CD4-positive, alpha-beta memory T cell (primary cell): ENCODE measurements at regions of chr6 and their contacts with region 1.

Region 1: GRCh38 chr6:16761471-16762267 is 409 bp upstream of the ATXN1 start:
- DNase-seq: peak; percentile 87 to 96 (median 89)
- H3K4me3 ChIP-seq: peak overlapping the region; percentile 75 to 84
- H3K4me3 Mint-ChIP-seq: peak overlapping the region; percentile 91 to 100 (median 98)
- H3K27ac ChIP-seq: peak overlapping the region; percentile 99
- H3K27ac Mint-ChIP-seq: peak overlapping the region; percentile 97 to 100 (median 99)
- H3K4me1 ChIP-seq: peaks cover 57% of the 10 kb centered on the region
- H3K4me1 Mint-ChIP-seq: peaks cover 46 to 87% (median 57%) of the 10 kb centered on the region in 4 donors
- H3K27me3 ChIP-seq: no peaks in the 10 kb centered on the region
- H3K27me3 Mint-ChIP-seq: peaks cover 0 to 4% of the 10 kb centered on the region in 2 donors

Region 2: GRCh38 chr6:16128759-16129622 is 632.7 kb before region 1 on chr6 and contains the start of gene MYLIP:
- CTCF ChIA-PET with region 1: no interaction called
- POLR2A ChIA-PET with region 1: interaction called, 5 read pairs
- intact Hi-C with region 1: loop called (anchors 5 kb)
- DNase-seq: peak; percentile 96 to 97 (median 97)
- H3K4me3 ChIP-seq: peak within 1 kb of the TSS; percentile 66 to 89
- H3K4me3 Mint-ChIP-seq: peak within 1 kb of the TSS; percentile 95 to 99 (median 98)
- H3K27ac ChIP-seq: peak within 1 kb of the TSS; percentile 93
- H3K27ac Mint-ChIP-seq: peak within 1 kb of the TSS; percentile 96 to 98 (median 97)
- H3K4me1 ChIP-seq: peaks cover 38% of the 10 kb centered on the region
- H3K4me1 Mint-ChIP-seq: peaks cover 18 to 54% (median 31%) of the 10 kb centered on the region in 4 donors
- H3K27me3 ChIP-seq: no peaks in the 10 kb centered on the region
- H3K27me3 Mint-ChIP-seq: peaks cover 3% of the 10 kb centered on the region in 2 donors
- total RNA-seq, gene MYLIP: 17.5 to 19.9 TPM

Region 3: DNA sequence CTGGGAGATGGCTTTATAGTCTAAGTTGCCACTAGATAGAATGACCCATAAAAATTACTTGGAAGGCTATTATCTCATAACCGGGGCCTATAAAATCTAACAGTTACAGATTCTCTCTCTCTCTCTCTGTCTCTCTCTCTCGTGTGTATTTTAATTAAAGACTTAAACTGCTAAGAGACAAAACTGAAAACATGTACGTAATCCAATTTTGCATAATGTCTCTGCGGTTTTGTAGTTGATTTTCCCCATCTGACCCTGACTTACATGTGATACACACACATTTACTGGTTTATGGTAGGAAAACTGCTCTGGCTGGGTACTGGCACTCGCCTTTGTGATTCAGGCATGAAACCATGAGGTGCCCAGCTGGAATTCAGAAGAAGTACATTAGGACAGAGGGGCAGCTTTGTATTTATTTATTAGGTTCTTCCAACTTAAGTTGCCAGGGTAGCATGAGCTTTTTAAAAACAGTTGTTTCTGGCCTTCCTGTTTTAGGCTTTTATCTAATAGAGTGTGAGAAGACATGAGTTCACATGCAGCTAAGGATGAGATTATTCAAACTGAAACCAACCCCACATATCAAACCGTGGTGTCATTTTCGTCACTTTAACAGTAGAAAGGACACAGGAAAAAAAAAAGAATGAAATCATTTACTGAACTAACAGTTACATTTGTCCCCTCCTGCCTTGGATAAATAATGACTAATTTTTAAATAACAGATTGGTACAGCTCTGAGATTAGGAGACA is 340.8 kb before region 1 on chr6:
- CTCF ChIA-PET with region 1: interaction called, 7 read pairs
- POLR2A ChIA-PET with region 1: interaction called, 13 read pairs
- intact Hi-C with region 1: no loop called
- DNase-seq: peak; percentile 75 to 86 (median 76)
- H3K4me3 ChIP-seq: peak overlapping the region; percentile 24 to 32
- H3K4me3 Mint-ChIP-seq: peak overlapping the region; percentile 73 to 92 (median 84)
- H3K27ac ChIP-seq: peak overlapping the region; percentile 69
- H3K27ac Mint-ChIP-seq: peak overlapping the region; percentile 92 to 99 (median 99)
- H3K4me1 ChIP-seq: peaks cover 53% of the 10 kb centered on the region
- H3K4me1 Mint-ChIP-seq: peaks cover 55 to 72% (median 60%) of the 10 kb centered on the region in 4 donors
- H3K27me3 ChIP-seq: no peaks in the 10 kb centered on the region
- H3K27me3 Mint-ChIP-seq: no peaks in the 10 kb centered on the region

Region 4: GRCh38 chr6:16651871-16652270 is 109.8 kb before region 1 on chr6:
- CTCF ChIA-PET with region 1: interaction called, 21 read pairs
- POLR2A ChIA-PET with region 1: interaction called, 30 read pairs
- intact Hi-C with region 1: loop called (anchors 5 kb)
- DNase-seq: peak; percentile 65 to 83 (median 79)
- H3K4me3 ChIP-seq: peak overlapping the region in 1 of 2 donors; percentile 6
- H3K4me3 Mint-ChIP-seq: peak overlapping the region; percentile 39 to 78 (median 70)
- H3K27ac ChIP-seq: peak overlapping the region; percentile 38
- H3K27ac Mint-ChIP-seq: peak overlapping the region; percentile 89 to 99 (median 93)
- H3K4me1 ChIP-seq: peaks cover 63% of the 10 kb centered on the region
- H3K4me1 Mint-ChIP-seq: peaks cover 46 to 66% (median 54%) of the 10 kb centered on the region in 4 donors
- H3K27me3 ChIP-seq: no peaks in the 10 kb centered on the region
- H3K27me3 Mint-ChIP-seq: no peaks in the 10 kb centered on the region

Region 5: GRCh38 chr6:16712931-16713484 is 48.7 kb before region 1 on chr6:
- CTCF ChIA-PET with region 1: interaction called, 44 read pairs
- POLR2A ChIA-PET with region 1: interaction called, 49 read pairs
- intact Hi-C with region 1: loop called (anchors 1 kb)
- DNase-seq: peak in 1 of 5 donors; percentile 62
- H3K4me3 ChIP-seq: peak overlapping the region; percentile 33 to 45
- H3K4me3 Mint-ChIP-seq: peak overlapping the region; percentile 70 to 89 (median 80)
- H3K27ac ChIP-seq: peak overlapping the region; percentile 67
- H3K27ac Mint-ChIP-seq: peak overlapping the region; percentile 74 to 95 (median 88)
- H3K4me1 ChIP-seq: peaks cover 36% of the 10 kb centered on the region
- H3K4me1 Mint-ChIP-seq: peaks cover 31 to 54% (median 43%) of the 10 kb centered on the region in 4 donors
- H3K27me3 ChIP-seq: no peaks in the 10 kb centered on the region
- H3K27me3 Mint-ChIP-seq: no peaks in the 10 kb centered on the region

Region 6: DNA sequence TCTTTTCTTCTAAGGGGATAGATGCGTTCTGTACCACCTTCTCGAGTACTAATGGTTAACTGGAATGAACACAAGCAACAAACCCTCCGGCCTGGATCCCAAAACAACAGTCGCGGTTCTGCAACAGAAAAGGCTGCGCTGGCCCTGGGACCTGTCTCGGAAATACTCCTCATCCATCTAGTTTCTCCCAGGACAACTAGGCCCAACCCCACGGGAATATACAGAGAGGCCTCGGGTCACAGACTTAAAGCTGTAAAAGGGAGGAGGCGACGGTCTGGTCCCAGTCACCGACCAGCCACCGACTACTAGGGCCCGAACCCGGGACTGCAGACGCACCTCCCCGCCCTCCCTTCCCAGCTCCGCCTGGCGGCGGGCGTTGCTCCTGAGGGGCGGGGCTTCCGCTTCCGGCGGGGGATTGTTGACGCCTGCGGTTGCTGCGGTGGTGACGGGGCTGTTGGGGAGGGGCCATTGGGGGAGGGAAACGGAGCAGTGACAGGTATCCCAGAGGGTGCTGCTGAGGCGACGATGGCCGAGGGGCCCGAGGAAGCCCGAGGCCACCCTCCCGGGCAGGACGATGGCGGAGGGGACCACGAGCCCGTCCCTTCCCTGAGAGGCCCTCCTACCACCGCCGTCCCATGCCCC is 838.3 kb after region 1 on chr6 and contains the start of gene FAM8A1:
- CTCF ChIA-PET with region 1: no interaction called
- POLR2A ChIA-PET with region 1: interaction called, 5 read pairs
- intact Hi-C with region 1: loop called (anchors 5 kb)
- DNase-seq: peak; percentile 92 to 94 (median 93)
- H3K4me3 ChIP-seq: peak within 1 kb of the TSS; percentile 50 to 64
- H3K4me3 Mint-ChIP-seq: peak within 1 kb of the TSS; percentile 88 to 96 (median 92)
- H3K27ac ChIP-seq: peak within 1 kb of the TSS; percentile 78
- H3K27ac Mint-ChIP-seq: peak within 1 kb of the TSS; percentile 81 to 96 (median 92)
- H3K4me1 ChIP-seq: peaks cover 42% of the 10 kb centered on the region
- H3K4me1 Mint-ChIP-seq: peaks cover 22 to 50% (median 35%) of the 10 kb centered on the region in 4 donors
- H3K27me3 ChIP-seq: no peaks in the 10 kb centered on the region
- H3K27me3 Mint-ChIP-seq: no peaks in the 10 kb centered on the region
- total RNA-seq, gene FAM8A1: 20.2 to 21.2 TPM